Activated CD4-positive, alpha-beta memory T cell treated with anti-CD3 and anti-CD28 coated beads for 36 hours (primary cell): ENCODE measurements at regions of chr4 and their contacts with region 1.

Region 1: GRCh38 chr4:97215409-97215941 is 927.8 kb downstream of the STPG2 start:
- DNase-seq: no peak
- H3K4me3 Mint-ChIP-seq: no peak overlapping the region
- H3K27ac Mint-ChIP-seq: no peak overlapping the region
- H3K4me1 Mint-ChIP-seq: no peaks in the 10 kb centered on the region
- H3K27me3 Mint-ChIP-seq: no peaks in the 10 kb centered on the region

Region 2: GRCh38 chr4:95761429-95762225 is 1453.8 kb before region 1 on chr4:
- CTCF ChIA-PET with region 1: no interaction called
- POLR2A ChIA-PET with region 1: no interaction called
- intact Hi-C with region 1: no loop called
- DNase-seq: no peak
- H3K4me3 Mint-ChIP-seq: no peak overlapping the region
- H3K27ac Mint-ChIP-seq: no peak overlapping the region
- H3K4me1 Mint-ChIP-seq: no peaks in the 10 kb centered on the region
- H3K27me3 Mint-ChIP-seq: peaks cover 3% of the 10 kb centered on the region

Region 3: GRCh38 chr4:96395747-96396146 is 819.7 kb before region 1 on chr4:
- CTCF ChIA-PET with region 1: no interaction called
- POLR2A ChIA-PET with region 1: no interaction called
- intact Hi-C with region 1: loop called (anchors 10 kb)
- DNase-seq: no peak
- H3K4me3 Mint-ChIP-seq: no peak overlapping the region
- H3K27ac Mint-ChIP-seq: no peak overlapping the region
- H3K4me1 Mint-ChIP-seq: no peaks in the 10 kb centered on the region
- H3K27me3 Mint-ChIP-seq: no peaks in the 10 kb centered on the region